Posterior vena cava (tissue), 2 donors: ENCODE measurements at regions of chr22 and their contacts with region 1.

Region 1: GRCh38 chr22:41543854-41544670 is at the start of gene POLR3H:
- DNase-seq: peak; percentile 100
- total RNA-seq, gene POLR3H: 29.9 to 35.4 TPM

Region 2: DNA sequence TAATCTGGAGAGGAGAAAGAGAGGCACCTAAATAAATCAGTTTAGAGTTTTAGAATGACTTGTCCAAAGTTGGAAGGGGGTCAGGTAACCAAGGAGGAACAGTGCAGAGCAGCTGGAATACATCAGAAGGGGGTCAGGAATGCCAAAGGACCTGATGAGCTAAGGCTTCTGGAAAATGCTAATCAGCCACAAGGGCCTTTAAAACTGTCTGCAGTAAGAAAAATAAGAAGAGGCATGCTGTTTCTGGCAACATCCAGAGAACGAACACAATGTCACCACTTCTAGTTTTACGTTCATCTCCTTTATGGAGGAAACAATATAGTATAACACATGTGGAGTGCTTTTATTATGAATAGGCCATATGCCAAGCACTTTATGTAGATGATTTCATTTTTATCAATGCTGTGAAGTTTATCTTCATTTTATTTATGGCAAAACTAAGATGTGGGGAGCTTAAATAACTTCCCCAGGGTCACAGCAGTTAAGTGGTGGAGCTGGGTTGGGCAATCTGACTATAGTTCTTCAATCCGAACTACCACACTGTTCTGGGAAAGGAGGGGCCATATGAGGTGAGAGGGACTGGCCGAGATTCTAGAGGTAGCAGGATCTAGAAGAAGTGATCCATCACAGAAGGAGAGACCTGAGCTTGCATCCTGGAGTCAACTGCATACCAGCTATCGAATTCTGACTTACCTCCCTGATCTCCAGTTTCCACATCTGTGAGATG is 52.5 kb before region 1 on chr22:
- intact Hi-C with region 1: loop called in 1 of 2 experiments (anchors 2 kb)
- DNase-seq: no peak

Region 3: GRCh38 chr22:41576877-41577276 is 32.8 kb after region 1 on chr22:
- intact Hi-C with region 1: no loop called
- DNase-seq: no peak

Region 4: DNA sequence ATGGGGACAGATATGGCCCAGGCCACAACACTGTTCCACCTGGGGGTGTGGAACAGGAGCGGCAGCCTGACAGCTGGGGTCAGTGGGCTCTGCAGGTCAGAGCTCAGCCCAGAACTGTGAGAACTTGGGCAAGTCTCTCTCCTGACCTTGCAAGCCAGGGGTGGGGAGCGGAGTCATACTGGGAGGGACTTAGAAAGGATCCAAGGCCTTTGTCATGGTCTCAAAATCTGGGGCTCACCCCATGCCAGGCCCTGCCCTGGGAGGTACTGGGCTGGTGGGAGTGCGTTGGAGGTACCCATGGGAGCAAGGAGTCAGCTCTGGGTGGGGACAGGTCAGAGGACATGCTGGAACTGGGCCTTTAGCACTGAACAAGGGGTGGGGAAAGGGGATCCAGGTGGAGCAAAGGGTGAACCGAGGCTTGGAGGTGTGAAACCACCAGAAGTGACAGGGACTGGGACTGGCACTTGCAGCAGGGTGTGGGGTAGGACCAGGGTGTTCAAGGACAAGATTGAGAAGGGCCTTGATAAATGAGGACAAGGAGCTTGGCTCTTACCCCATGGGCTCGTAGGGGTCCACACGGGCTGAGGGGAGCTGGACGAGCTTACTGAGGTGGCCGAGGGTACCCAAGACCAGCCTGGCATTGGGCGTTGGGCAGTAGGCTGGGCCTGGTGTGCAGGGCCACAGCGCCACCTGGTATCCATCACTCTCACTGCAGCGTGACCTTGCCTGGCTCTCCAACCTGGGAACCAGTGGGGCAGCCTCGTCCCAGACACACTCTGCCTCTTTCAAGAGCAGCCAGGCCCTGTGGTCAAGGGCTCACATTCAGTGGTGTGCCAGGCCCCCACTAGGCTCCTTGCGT is 52.9 kb after region 1 on chr22:
- intact Hi-C with region 1: loop called in 1 of 2 experiments (anchors 5 kb)
- DNase-seq: peak; percentile 82

Region 5: GRCh38 chr22:41608386-41608785 is 64.3 kb after region 1 on chr22:
- intact Hi-C with region 1: no loop called
- DNase-seq: no peak

Region 6: DNA sequence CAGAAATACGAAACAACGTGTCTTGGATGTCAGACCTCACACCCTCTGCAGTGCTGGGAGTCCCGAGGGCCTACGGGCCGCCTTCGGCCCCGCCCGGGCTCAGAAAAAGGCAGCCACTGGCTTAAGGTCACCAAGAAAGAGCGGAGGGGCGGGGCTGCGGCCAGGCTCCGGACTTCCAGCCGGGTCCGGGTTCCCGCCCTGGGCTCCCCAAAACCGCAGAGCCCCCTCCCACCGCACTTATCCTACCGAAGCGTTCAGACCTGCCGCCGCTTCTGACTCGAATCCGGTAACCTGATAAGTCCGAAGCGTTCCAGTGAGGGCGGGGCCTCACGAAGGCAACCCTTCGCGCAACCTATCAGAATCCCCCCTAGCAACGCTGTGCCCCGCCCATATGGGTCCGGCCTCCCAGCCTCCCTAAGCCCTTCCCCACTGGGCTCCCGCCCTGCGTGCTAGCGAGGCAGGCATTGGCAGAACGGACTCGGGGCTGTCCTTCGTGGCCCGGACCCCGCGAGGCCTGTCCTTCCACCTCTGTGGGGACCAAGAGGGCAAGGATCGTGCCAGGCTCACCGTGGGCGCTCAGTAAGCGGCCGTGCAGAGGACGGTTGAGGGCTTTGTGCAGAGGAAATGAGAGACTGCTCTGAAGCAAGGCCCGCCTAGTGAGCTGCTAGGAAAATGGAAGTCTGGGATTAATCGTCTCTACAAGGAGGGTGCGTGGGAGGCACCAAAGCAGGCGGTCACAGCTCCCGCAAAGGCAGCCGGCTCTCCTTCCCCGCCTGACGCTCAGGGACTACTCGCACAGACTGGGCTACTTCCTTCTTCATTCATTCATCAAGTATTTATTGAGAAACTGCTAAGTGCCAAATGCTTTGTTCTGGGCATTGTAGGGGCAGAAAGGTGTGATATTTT is 526.7 kb after region 1 on chr22 and contains the start of gene NAGA:
- intact Hi-C with region 1: no loop called
- DNase-seq: peak; percentile 98
- total RNA-seq, gene NAGA: 18.4 to 29.7 TPM